Activated naive CD4-positive, alpha-beta T cell treated with anti-CD3 and anti-CD28 coated beads for 36 hours (primary cell): ENCODE measurements at regions of chr14 and their contacts with region 1.

Region 1: GRCh38 chr14:99271951-99272631 is at the start of gene BCL11B:
- DNase-seq: peak; percentile 95
- H3K4me3 Mint-ChIP-seq: peak within 1 kb of the TSS; percentile 96
- H3K27ac Mint-ChIP-seq: peak within 1 kb of the TSS; percentile 97
- H3K4me1 Mint-ChIP-seq: peaks cover 23% of the 10 kb centered on the region
- H3K27me3 Mint-ChIP-seq: no peaks in the 10 kb centered on the region
- total RNA-seq, gene BCL11B: 71.7 to 71.9 TPM

Region 2: GRCh38 chr14:97620066-97620465 is 1652.0 kb before region 1 on chr14:
- CTCF ChIA-PET with region 1: no interaction called
- intact Hi-C with region 1: loop called (anchors 5 kb)
- DNase-seq: no peak
- H3K4me3 Mint-ChIP-seq: peak overlapping the region; percentile 72
- H3K27ac Mint-ChIP-seq: peak overlapping the region; percentile 76
- H3K4me1 Mint-ChIP-seq: peaks cover 46% of the 10 kb centered on the region
- H3K27me3 Mint-ChIP-seq: no peaks in the 10 kb centered on the region

Region 3: GRCh38 chr14:97724265-97724731 is 1547.8 kb before region 1 on chr14:
- CTCF ChIA-PET with region 1: no interaction called
- intact Hi-C with region 1: loop called (anchors 2 kb)
- DNase-seq: peak; percentile 64
- H3K4me3 Mint-ChIP-seq: peak overlapping the region; percentile 76
- H3K27ac Mint-ChIP-seq: peak overlapping the region; percentile 96
- H3K4me1 Mint-ChIP-seq: peaks cover 69% of the 10 kb centered on the region
- H3K27me3 Mint-ChIP-seq: no peaks in the 10 kb centered on the region

Region 4: GRCh38 chr14:98227000-98227726 is 1044.9 kb before region 1 on chr14:
- CTCF ChIA-PET with region 1: interaction called, 4 read pairs
- intact Hi-C with region 1: loop called (anchors 2 kb)
- DNase-seq: peak; percentile 67
- H3K4me3 Mint-ChIP-seq: peak overlapping the region; percentile 51
- H3K27ac Mint-ChIP-seq: peak overlapping the region; percentile 93
- H3K4me1 Mint-ChIP-seq: peaks cover 86% of the 10 kb centered on the region
- H3K27me3 Mint-ChIP-seq: no peaks in the 10 kb centered on the region

Region 5: DNA sequence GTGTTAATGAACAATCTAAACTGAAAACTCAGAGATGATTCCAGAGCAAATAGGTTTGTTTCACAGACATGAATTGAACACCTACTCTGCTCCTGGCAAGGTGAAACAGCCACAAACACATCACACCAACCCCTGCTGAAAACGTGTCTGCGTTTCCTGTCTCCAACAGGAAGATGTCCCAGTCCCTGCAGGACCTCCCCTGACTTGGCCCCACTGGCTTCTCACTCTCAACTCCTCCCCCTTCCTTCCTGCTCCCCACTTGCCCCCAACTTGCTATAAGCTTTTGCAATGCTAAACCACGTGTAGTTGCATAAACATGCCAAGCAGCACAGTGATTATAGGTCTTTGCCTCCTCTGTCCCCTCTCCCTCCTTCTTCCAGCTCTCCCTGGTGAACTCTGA is 567.6 kb before region 1 on chr14:
- CTCF ChIA-PET with region 1: no interaction called
- intact Hi-C with region 1: loop called (anchors 10 kb)
- DNase-seq: peak; percentile 61
- H3K4me3 Mint-ChIP-seq: no peak overlapping the region
- H3K27ac Mint-ChIP-seq: no peak overlapping the region
- H3K4me1 Mint-ChIP-seq: peaks cover 27% of the 10 kb centered on the region
- H3K27me3 Mint-ChIP-seq: no peaks in the 10 kb centered on the region

Region 6: DNA sequence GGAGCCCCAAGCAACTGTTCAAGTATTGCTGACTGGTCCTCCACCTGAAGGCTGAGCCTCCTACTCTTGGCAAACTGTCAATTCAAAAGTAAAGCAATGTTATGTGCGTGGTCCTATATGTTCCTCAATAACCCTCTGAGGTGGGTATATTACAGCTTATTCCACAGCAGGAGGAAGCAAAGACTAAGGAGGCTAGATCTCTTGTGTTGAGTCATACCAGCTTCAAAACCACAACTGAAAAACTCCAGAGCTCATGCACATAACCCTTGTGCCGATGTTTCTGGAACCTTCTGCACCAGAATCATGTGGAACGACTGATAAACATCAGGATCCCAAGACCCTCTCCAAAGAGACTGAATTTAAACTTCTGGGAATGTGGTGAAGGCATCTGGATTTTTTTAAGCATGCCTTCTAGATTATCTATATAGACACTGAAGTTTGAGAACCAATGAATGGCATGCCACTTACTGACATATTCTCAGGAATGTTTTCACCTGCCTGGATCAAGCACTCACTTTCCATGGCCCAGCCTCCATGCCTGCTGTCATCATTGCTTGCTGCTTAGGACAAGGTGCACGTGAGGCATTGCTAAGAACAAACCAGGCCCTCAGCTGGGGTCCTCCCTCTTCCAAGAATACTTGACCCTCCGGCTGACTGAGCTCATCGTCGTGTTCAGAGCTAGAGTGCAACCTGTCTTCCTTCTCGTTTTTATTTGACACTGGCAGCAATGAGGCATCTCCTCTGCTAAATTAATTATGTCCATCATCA is 194.8 kb before region 1 on chr14:
- CTCF ChIA-PET with region 1: no interaction called
- intact Hi-C with region 1: loop called (anchors 2 kb)
- DNase-seq: no peak
- H3K4me3 Mint-ChIP-seq: no peak overlapping the region
- H3K27ac Mint-ChIP-seq: no peak overlapping the region
- H3K4me1 Mint-ChIP-seq: peaks cover 9% of the 10 kb centered on the region
- H3K27me3 Mint-ChIP-seq: no peaks in the 10 kb centered on the region

Region 7: DNA sequence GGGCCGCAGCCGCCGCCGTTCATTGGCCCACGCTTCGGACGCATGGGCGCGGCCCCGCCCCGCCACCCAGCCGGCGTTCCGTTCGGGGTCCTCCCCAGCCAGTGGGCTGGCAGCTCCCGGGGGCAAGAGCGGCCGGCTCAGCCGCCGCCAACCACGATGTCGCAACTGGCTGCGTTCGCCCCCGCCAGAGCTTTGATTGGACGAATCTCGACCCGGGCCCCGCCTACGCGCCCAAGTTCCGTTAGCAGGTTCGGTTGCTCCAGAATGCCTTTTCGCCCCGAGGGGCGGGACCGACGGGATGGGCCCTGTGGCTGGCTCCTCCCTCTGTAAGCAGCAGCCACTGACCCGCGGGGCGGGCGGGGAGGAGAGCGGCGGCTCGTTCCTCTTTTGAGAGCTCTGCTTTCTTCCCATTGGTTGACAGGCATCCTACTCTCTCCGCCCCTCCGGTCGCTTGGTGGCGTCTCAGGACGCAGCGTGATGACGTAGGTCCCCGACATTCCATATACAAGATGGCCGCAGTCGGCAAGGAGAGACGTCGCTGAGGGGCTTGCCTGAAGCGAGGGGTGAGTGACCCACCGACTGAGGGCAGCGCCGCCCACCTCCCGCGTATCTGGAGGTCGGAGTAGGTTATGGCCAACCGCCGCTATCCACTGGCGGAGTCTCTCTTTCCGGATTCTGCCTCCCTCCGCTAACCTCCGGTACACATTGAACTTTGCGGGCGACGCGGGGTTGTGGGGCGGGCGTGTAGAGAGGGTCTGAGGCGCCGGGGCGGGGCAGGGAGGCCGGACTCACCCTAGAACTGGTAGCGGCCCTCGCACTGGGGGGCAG is 209.0 kb after region 1 on chr14 and contains the start of gene CCNK:
- CTCF ChIA-PET with region 1: no interaction called
- intact Hi-C with region 1: loop called (anchors 1 kb)
- DNase-seq: peak; percentile 100
- H3K4me3 Mint-ChIP-seq: peak within 1 kb of the TSS; percentile 90
- H3K27ac Mint-ChIP-seq: peak within 1 kb of the TSS; percentile 91
- H3K4me1 Mint-ChIP-seq: peaks cover 53% of the 10 kb centered on the region
- H3K27me3 Mint-ChIP-seq: no peaks in the 10 kb centered on the region
- total RNA-seq, gene CCNK: 90.7 to 99.0 TPM